ENCODE measurements at regions of chr9 and their contacts with region 1.

Region 1: DNA sequence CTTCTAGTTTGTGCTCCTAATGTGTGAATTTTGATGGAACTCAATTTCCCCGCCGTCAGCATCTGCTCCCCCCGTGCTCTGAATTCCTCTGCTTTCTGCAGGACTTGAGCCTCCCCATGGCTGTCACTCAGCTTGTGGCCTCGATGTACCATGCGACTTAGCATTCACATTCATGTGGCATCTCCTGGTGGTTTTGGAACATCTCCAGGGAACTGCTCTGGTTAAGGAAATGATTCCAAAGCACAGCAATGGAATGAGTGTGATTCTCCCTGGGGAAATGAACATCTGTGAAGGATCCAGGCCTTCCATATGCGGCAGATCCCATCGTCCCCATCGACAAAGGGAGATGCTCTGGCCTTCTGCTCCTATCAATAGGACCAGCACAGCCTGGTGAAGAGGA is 119.0 kb downstream of the ENTREP1 start:
- DNase-seq: no peak
- H3K4me3 ChIP-seq: no peak overlapping the region
- H3K27ac ChIP-seq: no peak overlapping the region
- H3K4me1 ChIP-seq: no peaks in the 10 kb centered on the region
- H3K27me3 ChIP-seq: no peaks in the 10 kb centered on the region
- CTCF ChIP-seq: no peak
- EP300 ChIP-seq: no peak
- POLR2A ChIP-seq: no peak

Region 2: DNA sequence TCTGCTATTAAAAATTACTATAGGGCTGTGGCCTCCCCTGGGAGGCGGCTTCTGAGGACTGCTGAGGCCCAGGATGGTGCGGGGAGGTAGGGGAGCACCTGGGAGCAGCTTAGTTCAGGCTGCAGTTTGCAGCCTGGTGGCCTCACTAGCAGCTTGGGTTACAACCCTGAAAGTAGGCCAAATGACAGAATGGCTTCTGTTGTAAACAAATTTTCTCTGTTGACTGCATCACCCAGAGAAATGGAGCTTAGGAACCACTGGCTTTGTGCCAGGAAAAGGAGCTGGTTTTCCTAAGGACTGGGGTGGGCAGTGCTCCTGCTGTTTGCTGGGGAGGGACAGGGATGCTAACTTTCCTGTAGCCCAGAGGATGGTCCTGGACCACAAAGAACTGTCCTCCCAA is 11.3 kb after region 1 on chr9:
- in situ Hi-C with region 1: no loop called
- intact Hi-C with region 1: no loop called
- DNase-seq: no peak
- H3K4me3 ChIP-seq: no peak overlapping the region
- H3K27ac ChIP-seq: no peak overlapping the region
- H3K4me1 ChIP-seq: no peaks in the 10 kb centered on the region
- H3K27me3 ChIP-seq: no peaks in the 10 kb centered on the region
- CTCF ChIP-seq: no peak
- EP300 ChIP-seq: no peak
- POLR2A ChIP-seq: no peak

Region 3: DNA sequence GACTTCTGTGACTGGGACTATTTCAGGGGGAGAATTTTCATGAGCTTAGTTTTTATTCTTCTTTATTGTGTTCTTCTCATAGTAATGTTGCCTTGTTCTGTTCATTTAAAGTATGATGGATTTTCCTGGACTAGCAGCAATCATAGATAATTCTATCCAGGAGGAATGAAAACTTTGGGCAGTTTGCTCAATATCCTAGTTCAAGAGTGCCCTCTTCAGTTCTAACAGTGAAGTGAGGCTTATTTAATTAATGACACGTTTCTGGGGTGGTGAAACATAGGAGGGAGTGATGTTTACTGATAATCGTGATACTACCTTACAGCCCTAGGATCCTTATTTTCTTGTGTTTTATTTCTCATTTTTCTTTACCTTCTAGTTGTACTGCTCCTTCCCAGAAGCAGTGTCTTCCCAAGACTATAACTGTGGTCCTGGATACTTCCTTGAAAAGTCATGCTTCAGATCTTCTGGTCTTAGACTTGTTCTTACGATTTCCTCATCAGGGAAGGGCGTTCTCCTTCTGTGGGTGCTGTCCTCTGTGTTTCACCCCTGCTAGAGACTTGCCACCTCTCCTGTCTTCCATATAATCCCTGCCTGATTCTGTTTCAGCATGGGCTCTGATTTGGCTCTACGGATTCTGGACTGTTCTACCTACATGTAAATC is 434.0 kb after region 1 on chr9:
- in situ Hi-C with region 1: loop called in 1 of 4 experiments (anchors 25 kb)
- intact Hi-C with region 1: no loop called
- DNase-seq: no peak
- H3K4me3 ChIP-seq: no peak overlapping the region
- H3K27ac ChIP-seq: no peak overlapping the region
- H3K4me1 ChIP-seq: no peaks in the 10 kb centered on the region
- H3K27me3 ChIP-seq: no peaks in the 10 kb centered on the region
- CTCF ChIP-seq: peak; percentile 53 to 67 (median 54)
- EP300 ChIP-seq: no peak
- POLR2A ChIP-seq: no peak